Sciatic nerve (tissue), 2 donors: ENCODE measurements at regions of chr14 and their contacts with region 1.

Region 1: GRCh38 chr14:53539489-53540126 is 386.5 kb upstream of the DDHD1 start:
- DNase-seq: peak; percentile 88
- ATAC-seq: peak; percentile 89

Region 2: GRCh38 chr14:54175298-54175942 is 635.8 kb after region 1 on chr14:
- intact Hi-C with region 1: loop called (anchors 10 kb)
- DNase-seq: peak; percentile 76
- ATAC-seq: peak; percentile 77

Region 3: GRCh38 chr14:54347997-54348611 is 808.5 kb after region 1 on chr14:
- intact Hi-C with region 1: loop called (anchors 10 kb)
- DNase-seq: no peak
- ATAC-seq: peak; percentile 42

Region 4: DNA sequence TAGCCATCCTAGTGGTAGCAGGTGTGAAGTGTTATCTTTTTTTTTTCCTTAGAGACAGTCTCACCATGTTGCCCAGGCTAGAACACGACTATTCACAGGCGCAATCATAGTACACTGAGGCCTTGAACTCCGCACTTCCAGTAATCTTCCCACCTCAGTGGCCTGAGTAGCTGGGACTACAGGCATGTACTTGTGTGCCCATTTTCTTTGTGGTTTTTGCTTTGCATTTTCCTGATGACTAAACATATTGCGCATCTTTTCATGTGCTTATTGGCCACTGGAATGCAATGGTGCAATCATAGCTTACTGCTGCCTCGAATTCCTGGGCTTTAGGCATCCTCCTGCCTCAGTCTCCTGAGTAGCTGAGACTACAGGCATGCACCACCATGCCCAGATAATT is 1396.3 kb after region 1 on chr14:
- intact Hi-C with region 1: no loop called
- DNase-seq: no peak
- ATAC-seq: no peak

Region 5: DNA sequence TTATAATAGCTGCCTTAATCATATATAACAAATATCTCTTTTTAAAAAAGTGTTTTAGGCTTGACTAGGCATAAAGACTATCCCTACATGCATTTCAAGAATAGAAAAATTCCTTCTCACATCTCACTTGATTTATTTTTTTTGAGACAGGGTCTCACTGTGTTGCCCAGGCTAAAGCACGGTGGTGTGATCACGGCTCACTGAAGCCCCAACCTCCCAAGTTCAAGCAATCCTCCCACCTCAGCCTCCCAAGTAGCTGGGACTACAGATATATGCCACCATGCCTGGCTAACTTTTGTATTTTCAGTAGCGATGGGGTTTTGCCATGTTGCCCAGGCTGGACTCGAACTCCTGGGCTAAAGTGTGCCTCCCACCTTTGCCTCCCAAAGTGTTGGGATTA is 1427.9 kb after region 1 on chr14:
- intact Hi-C with region 1: no loop called
- DNase-seq: no peak
- ATAC-seq: no peak